GM18951 (cell line): ENCODE measurements at regions of chr11 and their contacts with region 1.

Region 1: GRCh38 chr11:55942785-55943392 is 6.7 kb upstream of the OR5I1 start:
- POLR2A ChIP-seq: no peak

Region 2: GRCh38 chr11:55481416-55481815 is 461.5 kb before region 1 on chr11:
- in situ Hi-C with region 1: no loop called
- POLR2A ChIP-seq: no peak

Region 3: GRCh38 chr11:56783448-56784041 is 840.7 kb after region 1 on chr11:
- in situ Hi-C with region 1: loop called (anchors 25 kb)
- POLR2A ChIP-seq: no peak